GM10248 (cell line): ENCODE measurements at regions of chr17 and their contacts with region 1.

Region 1: GRCh38 chr17:64491034-64491859 is 5.6 kb downstream of the POLG2 start:
- DNase-seq: no peak
- CTCF ChIP-seq: peak; percentile 71

Region 2: DNA sequence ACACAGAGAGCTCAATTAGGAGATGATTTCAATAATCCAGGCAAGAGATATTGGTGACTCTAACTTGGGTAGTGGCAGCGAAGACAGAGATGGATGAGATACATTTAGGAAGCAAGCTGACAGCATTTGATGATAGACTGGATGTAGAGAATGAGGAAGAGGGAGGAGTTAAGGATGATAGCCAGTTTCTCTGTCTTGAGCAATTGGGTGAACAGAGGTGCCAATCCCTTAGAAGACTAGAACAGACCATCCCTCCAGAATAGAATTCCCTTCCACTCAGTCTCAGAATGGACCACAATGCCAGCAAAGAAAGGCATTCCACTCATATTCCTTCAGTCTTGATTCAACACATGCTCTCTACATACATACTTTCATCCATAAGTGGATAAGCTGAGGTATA is 11.6 kb before region 1 on chr17:
- CTCF ChIA-PET with region 1: interaction called, 58 read pairs
- POLR2A ChIA-PET with region 1: no interaction called
- DNase-seq: no peak
- CTCF ChIP-seq: no peak